Activated naive CD4-positive, alpha-beta T cell treated with anti-CD3 and anti-CD28 coated beads for 36 hours (primary cell): ENCODE measurements at regions of chr6 and their contacts with region 1.

Region 1: GRCh38 chr6:72825315-72825911 is 203.5 kb downstream of the KCNQ5 start:
- DNase-seq: no peak
- H3K4me3 Mint-ChIP-seq: no peak overlapping the region
- H3K27ac Mint-ChIP-seq: peak overlapping the region; percentile 13
- H3K4me1 Mint-ChIP-seq: peaks cover 39% of the 10 kb centered on the region
- H3K27me3 Mint-ChIP-seq: no peaks in the 10 kb centered on the region

Region 2: GRCh38 chr6:72689107-72689954 is 136.1 kb before region 1 on chr6:
- CTCF ChIA-PET with region 1: no interaction called
- intact Hi-C with region 1: no loop called
- DNase-seq: no peak
- H3K4me3 Mint-ChIP-seq: no peak overlapping the region
- H3K27ac Mint-ChIP-seq: no peak overlapping the region
- H3K4me1 Mint-ChIP-seq: peaks cover 4% of the 10 kb centered on the region
- H3K27me3 Mint-ChIP-seq: no peaks in the 10 kb centered on the region

Region 3: DNA sequence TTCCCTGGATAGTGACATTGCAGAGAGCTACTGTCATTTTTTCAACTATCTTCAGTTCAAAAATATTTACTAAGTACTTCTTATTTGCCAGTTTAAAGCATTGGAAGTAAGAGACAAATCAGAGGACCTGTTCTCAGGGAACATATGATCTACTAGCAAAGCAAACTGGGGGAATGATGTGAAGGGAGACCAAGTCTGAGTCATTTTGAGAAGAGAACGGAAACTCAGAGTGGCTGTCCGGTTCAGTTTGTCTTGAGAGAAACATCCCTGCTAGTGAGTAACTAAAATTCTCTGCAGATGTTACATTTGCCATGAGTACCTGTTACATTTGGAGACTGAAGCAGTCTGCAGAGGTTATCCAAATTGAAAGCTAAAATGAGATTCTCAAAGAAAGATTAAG is 85.3 kb before region 1 on chr6:
- CTCF ChIA-PET with region 1: no interaction called
- intact Hi-C with region 1: loop called (anchors 1 kb)
- DNase-seq: peak; percentile 22
- H3K4me3 Mint-ChIP-seq: no peak overlapping the region
- H3K27ac Mint-ChIP-seq: peak overlapping the region; percentile 4
- H3K4me1 Mint-ChIP-seq: peaks cover 30% of the 10 kb centered on the region
- H3K27me3 Mint-ChIP-seq: no peaks in the 10 kb centered on the region

Region 4: GRCh38 chr6:72861935-72862432 is 36.6 kb after region 1 on chr6:
- CTCF ChIA-PET with region 1: interaction called, 4 read pairs
- intact Hi-C with region 1: loop called (anchors 1 kb)
- DNase-seq: peak; percentile 5
- H3K4me3 Mint-ChIP-seq: no peak overlapping the region
- H3K27ac Mint-ChIP-seq: peak overlapping the region; percentile 33
- H3K4me1 Mint-ChIP-seq: peaks cover 7% of the 10 kb centered on the region
- H3K27me3 Mint-ChIP-seq: no peaks in the 10 kb centered on the region

Region 5: GRCh38 chr6:73129653-73130443 is 304.4 kb after region 1 on chr6:
- CTCF ChIA-PET with region 1: interaction called, 3 read pairs
- intact Hi-C with region 1: loop called (anchors 5 kb)
- DNase-seq: peak; percentile 94
- H3K4me3 Mint-ChIP-seq: peak overlapping the region; percentile 36
- H3K27ac Mint-ChIP-seq: no peak overlapping the region
- H3K4me1 Mint-ChIP-seq: peaks cover 4% of the 10 kb centered on the region
- H3K27me3 Mint-ChIP-seq: no peaks in the 10 kb centered on the region

Region 6: DNA sequence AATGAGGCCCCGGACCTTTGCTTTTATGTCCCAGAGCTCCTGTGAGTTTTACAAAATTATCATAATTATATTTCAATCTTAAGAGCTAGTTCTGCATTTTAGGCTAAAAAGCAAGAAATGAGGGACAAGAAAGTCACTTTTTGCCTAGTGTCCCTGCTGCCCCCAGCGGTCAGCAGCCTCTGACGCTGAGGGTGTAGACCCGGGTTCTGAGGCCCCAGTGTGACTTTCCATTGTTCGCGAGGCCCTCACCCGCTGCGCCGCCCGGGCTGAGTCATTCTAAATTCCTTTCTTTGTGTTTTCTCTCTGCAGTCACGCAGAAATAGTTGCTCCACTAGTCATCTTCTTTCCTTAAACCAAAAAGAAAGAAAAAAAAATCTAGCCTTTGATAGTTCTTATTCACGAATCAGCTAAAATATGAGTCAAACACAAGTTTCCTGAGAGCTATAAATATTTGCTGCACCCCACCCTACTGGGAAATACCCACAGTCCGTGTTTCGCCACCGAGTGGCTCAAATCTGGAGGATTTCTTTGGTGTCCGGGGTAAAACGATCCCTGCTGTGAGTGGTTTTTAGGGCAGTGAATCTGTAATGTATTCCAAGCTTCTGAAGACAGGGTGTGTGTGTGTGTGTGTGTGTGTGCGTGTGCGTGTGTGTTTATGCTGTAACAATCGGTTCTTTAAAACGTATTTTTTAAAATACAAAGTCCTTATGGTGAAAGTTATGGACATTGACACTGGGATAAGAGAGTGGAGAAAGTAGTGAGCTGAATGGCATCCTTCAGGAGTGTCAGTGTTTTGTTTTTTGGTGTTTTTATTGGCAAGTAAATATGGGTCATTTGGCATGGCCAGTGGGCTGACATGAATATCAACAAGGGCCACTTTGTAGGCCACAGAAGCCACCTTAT is 755.1 kb after region 1 on chr6:
- CTCF ChIA-PET with region 1: no interaction called
- intact Hi-C with region 1: loop called (anchors 1 kb)
- DNase-seq: peak; percentile 90
- H3K4me3 Mint-ChIP-seq: peak overlapping the region; percentile 76
- H3K27ac Mint-ChIP-seq: peak overlapping the region; percentile 99
- H3K4me1 Mint-ChIP-seq: peaks cover 28% of the 10 kb centered on the region
- H3K27me3 Mint-ChIP-seq: no peaks in the 10 kb centered on the region